Sigmoid colon (tissue), 7 donors: ENCODE measurements at regions of chr1 and their contacts with region 1.

Region 1: DNA sequence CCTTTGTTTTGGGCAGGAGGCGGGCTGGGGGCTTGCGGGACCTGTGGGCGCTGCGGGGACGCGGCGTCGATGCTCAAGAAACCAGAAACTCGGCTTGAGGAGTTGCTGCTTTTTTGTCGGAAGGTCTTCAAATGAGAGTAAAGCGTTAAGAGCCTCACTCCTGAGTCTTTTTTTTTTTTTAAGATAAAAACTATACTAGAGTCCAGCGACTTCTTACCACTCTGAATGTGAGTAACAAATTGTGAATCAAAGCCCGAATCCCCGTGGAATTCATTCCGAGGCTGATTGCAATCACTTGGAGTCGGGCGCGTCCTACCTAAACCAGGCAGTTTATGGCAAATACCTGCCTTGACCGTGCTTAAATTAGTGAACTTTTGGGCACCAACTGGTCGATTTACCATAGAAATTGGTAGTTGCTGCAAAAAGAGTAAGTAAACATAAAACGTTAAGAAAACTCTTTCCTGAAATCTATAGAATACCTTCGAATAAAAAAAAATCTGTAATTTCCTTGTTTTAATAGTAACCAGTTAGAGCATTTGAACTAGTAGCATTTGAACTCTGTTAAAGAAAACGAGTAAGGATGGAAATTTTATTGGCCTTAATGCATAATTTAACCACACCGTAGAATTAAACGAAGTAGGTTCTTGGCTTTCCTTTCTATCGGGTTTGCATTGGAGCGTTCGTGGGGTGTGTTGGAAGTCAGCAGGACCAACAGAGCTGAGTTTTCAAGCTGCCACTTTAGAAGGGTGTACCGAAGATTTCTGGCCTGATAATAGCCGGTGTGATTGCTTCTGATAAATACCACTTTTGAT is 769 bp downstream of the GPSM2 start:
- DNase-seq: no peak
- H3K4me3 ChIP-seq: peak overlapping the region; percentile 86 to 97 (median 96)
- H3K27ac ChIP-seq: peak overlapping the region; percentile 89 to 95 (median 90)
- H3K4me1 ChIP-seq: peaks cover 0 to 29% (median 23%) of the 10 kb centered on the region in 4 donors
- H3K27me3 ChIP-seq: no peaks in the 10 kb centered on the region
- CTCF ChIP-seq: no peak
- EP300 ChIP-seq: no peak
- POLR2A ChIP-seq: no peak

Region 2: DNA sequence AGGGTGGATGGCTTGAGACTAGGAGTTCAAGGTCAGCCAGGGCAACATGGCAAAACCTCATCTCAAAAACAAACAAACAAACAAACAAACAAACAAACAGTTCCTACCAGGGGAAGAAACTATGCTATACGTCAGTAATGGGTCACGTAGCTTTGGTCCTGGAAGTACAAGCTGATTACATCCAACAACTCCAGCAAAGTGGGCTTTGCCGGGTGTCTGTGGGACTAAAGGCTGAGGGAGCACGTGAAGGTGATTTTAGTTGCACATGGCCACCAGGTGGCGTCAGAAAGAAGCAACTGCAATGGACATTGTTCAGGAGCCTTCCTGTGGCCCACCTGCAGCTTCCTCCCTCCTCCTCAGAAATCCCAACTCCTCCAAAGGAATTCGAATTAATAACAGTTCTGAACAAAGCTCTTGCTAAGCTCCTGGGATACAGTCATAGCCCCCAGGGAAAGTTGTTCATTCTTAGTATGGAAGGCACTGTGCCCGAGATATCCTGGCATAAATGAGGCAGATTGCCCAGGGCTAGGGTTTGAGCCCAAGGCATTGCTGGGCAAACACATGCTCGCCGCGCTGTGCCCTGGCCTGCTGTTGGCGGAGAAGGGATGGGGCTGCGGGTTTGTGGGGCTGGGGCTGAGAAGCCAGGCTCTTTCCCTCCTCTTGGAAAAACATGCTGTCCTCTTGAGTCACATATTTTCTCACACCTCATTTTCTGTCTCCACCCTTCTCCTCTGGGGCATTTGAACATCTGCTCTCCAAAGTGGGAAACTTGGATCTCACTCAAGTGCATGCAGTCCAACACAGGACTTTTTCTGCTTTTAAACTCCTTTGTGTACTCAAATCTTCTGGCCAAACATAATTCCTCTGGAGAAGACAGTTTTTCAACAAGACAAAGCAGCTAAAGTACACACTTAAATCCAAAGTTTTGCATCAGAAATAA is 49.3 kb before region 1 on chr1:
- intact Hi-C with region 1: loop called (anchors 5 kb)
- DNase-seq: peak; percentile 93
- H3K4me3 ChIP-seq: no peak overlapping the region
- H3K27ac ChIP-seq: peak overlapping the region; percentile 78 to 89 (median 84)
- H3K4me1 ChIP-seq: peaks cover 0 to 46% (median 40%) of the 10 kb centered on the region in 4 donors
- H3K27me3 ChIP-seq: no peaks in the 10 kb centered on the region
- CTCF ChIP-seq: peak; percentile 62 to 86 (median 76)
- EP300 ChIP-seq: no peak
- POLR2A ChIP-seq: no peak

Region 3: DNA sequence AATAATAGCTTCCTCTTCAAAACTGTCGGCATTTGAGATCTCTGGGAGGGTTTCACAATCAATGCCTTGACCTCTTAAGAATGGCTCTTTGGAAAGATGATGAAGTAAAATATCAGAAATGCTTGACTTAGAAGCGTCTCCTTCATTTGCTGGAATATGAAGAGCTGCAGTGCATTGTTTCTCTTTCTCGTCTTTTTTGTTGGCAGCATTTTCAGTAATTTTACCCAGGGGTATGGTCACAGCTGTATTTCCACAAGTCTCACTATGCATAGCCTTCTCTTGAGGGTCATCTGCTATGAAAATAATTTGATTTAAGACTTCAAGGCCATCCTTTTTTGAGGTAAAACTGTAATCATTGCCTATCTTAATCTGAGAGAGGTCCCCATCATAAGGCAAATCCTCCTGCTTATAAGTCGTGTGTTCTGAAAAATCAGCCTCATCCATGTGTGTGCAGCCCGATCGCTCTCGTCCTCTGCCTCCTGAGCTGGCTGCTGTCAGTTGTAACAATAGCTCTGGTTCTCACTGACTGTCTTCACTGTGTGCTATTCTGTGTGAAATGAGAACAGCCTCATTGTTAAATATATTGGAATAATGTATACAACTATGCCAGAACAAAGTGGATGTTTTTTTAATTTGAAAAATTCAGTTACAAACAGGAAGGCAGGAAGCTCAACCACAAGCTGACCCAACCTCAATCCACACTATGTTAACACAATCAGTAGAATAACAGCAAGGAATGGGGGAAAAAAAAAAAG is 25.2 kb before region 1 on chr1:
- intact Hi-C with region 1: loop called (anchors 2 kb)
- DNase-seq: no peak
- H3K4me3 ChIP-seq: no peak overlapping the region
- H3K27ac ChIP-seq: peak overlapping the region; percentile 29 to 61 (median 48)
- H3K4me1 ChIP-seq: peaks cover 0 to 33% (median 23%) of the 10 kb centered on the region in 4 donors
- H3K27me3 ChIP-seq: no peaks in the 10 kb centered on the region
- CTCF ChIP-seq: no peak
- EP300 ChIP-seq: no peak
- POLR2A ChIP-seq: no peak